Posterior vena cava (tissue), 2 donors: ENCODE measurements at regions of chr15 and their contacts with region 1.

Region 1: GRCh38 chr15:42533246-42533645 is 15.3 kb downstream of the LRRC57 start:
- DNase-seq: no peak

Region 2: GRCh38 chr15:42665827-42666226 is 132.6 kb after region 1 on chr15:
- intact Hi-C with region 1: loop called in 1 of 2 experiments (anchors 10 kb)
- DNase-seq: no peak

Region 3: GRCh38 chr15:43241100-43241499 is 707.9 kb after region 1 on chr15:
- intact Hi-C with region 1: no loop called
- DNase-seq: peak; percentile 87